ENCODE measurements at regions of chr1 and their contacts with region 1.

Region 1: GRCh38 chr1:12153181-12153785 is 13.5 kb upstream of the TNFRSF1B start:
- DNase-seq: peak; percentile 32
- ATAC-seq: peak; percentile 3
- H3K4me3 Mint-ChIP-seq: no peak overlapping the region
- H3K27ac Mint-ChIP-seq: peak overlapping the region; percentile 25
- H3K4me1 Mint-ChIP-seq: peaks cover 89% of the 10 kb centered on the region
- H3K27me3 Mint-ChIP-seq: no peaks in the 10 kb centered on the region
- CTCF ChIP-seq: no peak

Region 2: GRCh38 chr1:11967028-11967547 is 186.2 kb before region 1 on chr1:
- CTCF ChIA-PET with region 1: no interaction called
- POLR2A ChIA-PET with region 1: no interaction called
- intact Hi-C with region 1: no loop called
- DNase-seq: peak; percentile 16
- ATAC-seq: peak; percentile 39
- H3K4me3 Mint-ChIP-seq: no peak overlapping the region
- H3K27ac Mint-ChIP-seq: no peak overlapping the region
- H3K4me1 Mint-ChIP-seq: no peaks in the 10 kb centered on the region
- H3K27me3 Mint-ChIP-seq: no peaks in the 10 kb centered on the region
- CTCF ChIP-seq: no peak

Region 3: DNA sequence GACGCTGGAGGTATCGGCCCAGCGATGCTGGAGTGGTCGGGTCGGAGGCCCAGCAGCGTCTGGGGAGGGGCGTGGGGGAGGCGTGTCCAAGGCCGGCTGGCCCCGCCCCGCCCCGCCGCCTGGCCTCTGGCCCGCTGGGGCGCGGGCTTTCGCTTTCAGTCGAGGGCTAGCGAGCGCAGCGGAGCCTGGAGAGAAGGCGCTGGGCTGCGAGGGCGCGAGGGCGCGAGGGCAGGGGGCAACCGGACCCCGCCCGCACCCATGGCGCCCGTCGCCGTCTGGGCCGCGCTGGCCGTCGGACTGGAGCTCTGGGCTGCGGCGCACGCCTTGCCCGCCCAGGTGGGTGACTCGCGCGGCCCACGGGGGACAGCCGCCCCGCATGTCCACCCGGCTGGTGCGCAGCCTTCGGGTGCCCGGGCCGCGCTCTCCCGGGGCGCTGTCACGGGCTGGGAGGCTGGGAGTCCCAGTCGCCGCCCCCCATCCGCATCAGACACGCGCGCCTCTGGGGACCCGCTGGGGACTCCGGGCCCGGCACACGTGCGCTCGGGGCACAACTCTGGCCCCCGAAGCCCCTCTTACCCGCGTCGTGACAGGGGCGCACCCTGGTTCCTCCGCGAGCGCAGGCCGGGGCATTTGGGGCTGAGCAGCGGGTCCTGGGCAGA is 13.7 kb after region 1 on chr1 and contains the start of gene TNFRSF1B:
- CTCF ChIA-PET with region 1: interaction called, 13 read pairs
- POLR2A ChIA-PET with region 1: interaction called, 24 read pairs
- intact Hi-C with region 1: no loop called
- DNase-seq: peak; percentile 75
- ATAC-seq: peak; percentile 60
- H3K4me3 Mint-ChIP-seq: peak within 1 kb of the TSS; percentile 92
- H3K27ac Mint-ChIP-seq: peak within 1 kb of the TSS; percentile 99
- H3K4me1 Mint-ChIP-seq: peaks cover 64% of the 10 kb centered on the region
- H3K27me3 Mint-ChIP-seq: no peaks in the 10 kb centered on the region
- CTCF ChIP-seq: no peak
- total RNA-seq, gene TNFRSF1B: 173 to 191 TPM